ENCODE measurements at regions of chr1 and their contacts with region 1.

Region 1: GRCh38 chr1:204446370-204447111 is 34.9 kb upstream of the PPP1R15B start:
- DNase-seq: peak; percentile 69 to 89 (median 80)
- ATAC-seq: peak; percentile 84 to 92 (median 90)
- H3K4me3 ChIP-seq: no peak overlapping the region
- H3K27ac ChIP-seq: no peak overlapping the region
- H3K4me1 ChIP-seq: no peaks in the 10 kb centered on the region
- H3K27me3 ChIP-seq: no peaks in the 10 kb centered on the region
- CTCF ChIP-seq: peak; percentile 58 to 82 (median 74)

Region 2: GRCh38 chr1:204494281-204495077 is 47.9 kb after region 1 on chr1 and contains the start of gene PIK3C2B:
- intact Hi-C with region 1: loop called (anchors 2 to 10 kb)
- DNase-seq: peak; percentile 75 to 93 (median 84)
- ATAC-seq: peak; percentile 78 to 90 (median 89)
- H3K4me3 ChIP-seq: peak within 1 kb of the TSS; percentile 62 to 72 (median 64)
- H3K27ac ChIP-seq: peak within 1 kb of the TSS; percentile 85 to 91 (median 88)
- H3K4me1 ChIP-seq: peaks cover 8 to 12% (median 10%) of the 10 kb centered on the region in 3 donors
- H3K27me3 ChIP-seq: no peaks in the 10 kb centered on the region
- CTCF ChIP-seq: peak; percentile 15 to 46 (median 25)
- total RNA-seq, gene PIK3C2B: 8.7 to 17.5 (median 9.7) TPM

Region 3: GRCh38 chr1:204503122-204503912 is 56.8 kb after region 1 on chr1:
- intact Hi-C with region 1: loop called (anchors 2 to 10 kb)
- DNase-seq: no peak
- ATAC-seq: peak in 3 of 4 donors; percentile 27 to 37 (median 35)
- H3K4me3 ChIP-seq: no peak overlapping the region
- H3K27ac ChIP-seq: peak overlapping the region in 2 of 4 donors; percentile 49 to 69
- H3K4me1 ChIP-seq: peaks cover 5 to 9% (median 7%) of the 10 kb centered on the region in 3 donors
- H3K27me3 ChIP-seq: no peaks in the 10 kb centered on the region
- CTCF ChIP-seq: peak; percentile 28 to 66 (median 56)

Region 4: DNA sequence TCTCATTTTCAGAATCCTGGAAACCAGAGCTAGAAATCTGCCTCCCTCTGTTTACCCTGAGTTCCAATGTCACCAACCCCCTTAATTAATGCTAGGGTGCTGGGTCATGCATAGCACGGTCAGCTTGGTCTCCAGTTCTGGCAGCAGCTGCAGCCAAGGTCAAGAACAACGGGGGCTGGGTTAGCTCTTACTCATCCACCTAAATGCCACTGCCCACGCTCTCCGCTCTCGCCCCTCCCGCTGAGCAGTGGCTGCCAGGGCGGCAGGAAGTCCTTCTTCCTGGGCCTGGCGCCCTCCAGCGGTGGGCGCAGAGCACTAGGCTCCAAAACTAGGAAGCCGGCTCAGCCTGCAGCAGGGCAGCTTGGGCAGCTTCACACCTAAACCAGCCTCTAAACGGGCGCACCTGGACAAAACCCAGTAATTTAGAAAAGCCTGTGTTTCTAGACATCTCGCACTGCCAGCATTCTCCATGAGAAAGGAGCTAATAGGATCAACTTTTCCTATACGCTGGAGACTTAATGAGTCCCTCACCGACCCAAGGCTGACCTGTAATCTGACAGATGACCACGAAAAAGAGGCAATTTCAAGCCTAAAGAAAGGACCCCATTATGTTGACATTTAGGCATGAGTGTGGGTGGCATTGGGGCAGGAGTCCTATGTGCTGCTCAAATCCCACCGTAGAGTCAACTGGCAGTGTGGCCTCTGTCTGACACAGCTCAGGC is 317.3 kb after region 1 on chr1:
- intact Hi-C with region 1: no loop called
- DNase-seq: peak; percentile 85 to 95 (median 92)
- ATAC-seq: peak; percentile 97 to 100 (median 100)
- H3K4me3 ChIP-seq: no peak overlapping the region
- H3K27ac ChIP-seq: no peak overlapping the region
- H3K4me1 ChIP-seq: peaks cover 0 to 9% (median 3%) of the 10 kb centered on the region in 3 donors
- H3K27me3 ChIP-seq: no peaks in the 10 kb centered on the region
- CTCF ChIP-seq: peak; percentile 81 to 88 (median 84)